Dorsolateral prefrontal cortex (tissue), 120 donors: ENCODE measurements at regions of chr2 and their contacts with region 1.

Region 1: GRCh38 chr2:24490674-24491625 is at the start of gene NCOA1:
- DNase-seq: peak; percentile 73 to 92 (median 86)
- H3K4me3 ChIP-seq: peak within 1 kb of the TSS; percentile 60 to 94 (median 82)
- H3K27ac ChIP-seq: peak within 1 kb of the TSS; percentile 70 to 99 (median 96)
- H3K27me3 ChIP-seq: no peaks in the 10 kb centered on the region
- CTCF ChIP-seq: peak in 32 of 56 donors; percentile 8 to 64 (median 32)
- total RNA-seq, gene NCOA1: 72.6 to 141 (median 104) TPM

Region 2: DNA sequence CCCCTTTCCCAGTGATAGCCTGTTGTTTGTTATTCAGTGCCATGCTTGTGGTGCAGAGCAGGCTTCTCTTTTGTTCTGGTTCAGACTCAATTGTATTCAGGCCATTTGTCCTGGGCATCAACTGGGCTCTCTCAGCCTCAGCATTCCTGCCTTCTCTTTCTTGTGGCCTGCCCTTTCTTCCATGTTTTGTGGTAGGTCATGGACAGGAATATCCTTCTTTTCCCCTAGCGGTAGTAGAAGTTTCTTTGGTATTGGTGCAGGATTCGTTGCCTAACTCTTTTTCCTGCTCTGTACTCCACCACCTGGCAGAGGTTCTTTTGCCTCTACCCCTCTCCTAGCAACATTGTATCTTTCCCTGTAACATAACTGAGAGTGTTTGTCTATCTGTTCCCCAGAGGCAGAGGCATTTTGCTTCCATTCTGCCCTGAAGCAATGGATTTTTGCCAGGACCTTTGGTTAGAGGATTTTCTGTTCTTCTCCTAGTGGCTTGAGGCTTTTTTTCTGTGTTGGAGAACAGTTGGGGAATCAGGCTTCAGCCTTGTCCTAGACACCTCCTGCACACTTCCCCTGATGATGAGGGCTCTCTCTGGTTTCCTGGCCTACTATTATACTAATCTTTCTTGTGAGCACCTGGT is 68.6 kb after region 1 on chr2:
- intact Hi-C with region 1: loop called in 1 of 2 experiments (anchors 5 kb)
- DNase-seq: no peak
- H3K4me3 ChIP-seq: peak overlapping the region in 2 of 59 donors; percentile 18 to 36
- H3K27ac ChIP-seq: peak overlapping the region in 37 of 59 donors; percentile 0 to 77 (median 48)
- H3K27me3 ChIP-seq: no peaks in the 10 kb centered on the region
- CTCF ChIP-seq: no peak

Region 3: DNA sequence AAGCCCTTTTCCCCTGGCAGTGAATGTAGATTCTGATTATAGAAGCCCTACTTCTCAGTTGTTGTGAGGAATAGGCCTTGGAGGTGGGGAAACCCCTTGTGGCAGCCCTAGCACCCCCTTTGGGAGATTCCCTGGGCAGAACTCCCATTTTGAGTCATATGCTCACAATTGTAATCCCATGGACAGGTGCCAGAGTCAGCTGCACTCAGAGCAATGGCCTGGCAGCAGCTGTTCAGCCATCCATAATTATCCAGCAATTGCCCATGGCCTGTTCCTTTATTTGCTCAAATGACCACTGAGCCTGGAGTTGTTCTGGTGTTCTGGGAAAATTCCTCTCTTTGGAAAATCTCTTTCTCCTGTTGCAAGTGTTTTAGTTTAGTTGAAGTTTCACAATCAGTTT is 230.5 kb after region 1 on chr2:
- intact Hi-C with region 1: loop called (anchors 10 kb)
- DNase-seq: peak; percentile 56 to 90 (median 80)
- H3K4me3 ChIP-seq: peak overlapping the region in 13 of 59 donors; percentile 0 to 40 (median 5)
- H3K27ac ChIP-seq: peak overlapping the region; percentile 6 to 89 (median 75)
- H3K27me3 ChIP-seq: no peaks in the 10 kb centered on the region
- CTCF ChIP-seq: peak in 23 of 56 donors; percentile 7 to 55 (median 26)

Region 4: DNA sequence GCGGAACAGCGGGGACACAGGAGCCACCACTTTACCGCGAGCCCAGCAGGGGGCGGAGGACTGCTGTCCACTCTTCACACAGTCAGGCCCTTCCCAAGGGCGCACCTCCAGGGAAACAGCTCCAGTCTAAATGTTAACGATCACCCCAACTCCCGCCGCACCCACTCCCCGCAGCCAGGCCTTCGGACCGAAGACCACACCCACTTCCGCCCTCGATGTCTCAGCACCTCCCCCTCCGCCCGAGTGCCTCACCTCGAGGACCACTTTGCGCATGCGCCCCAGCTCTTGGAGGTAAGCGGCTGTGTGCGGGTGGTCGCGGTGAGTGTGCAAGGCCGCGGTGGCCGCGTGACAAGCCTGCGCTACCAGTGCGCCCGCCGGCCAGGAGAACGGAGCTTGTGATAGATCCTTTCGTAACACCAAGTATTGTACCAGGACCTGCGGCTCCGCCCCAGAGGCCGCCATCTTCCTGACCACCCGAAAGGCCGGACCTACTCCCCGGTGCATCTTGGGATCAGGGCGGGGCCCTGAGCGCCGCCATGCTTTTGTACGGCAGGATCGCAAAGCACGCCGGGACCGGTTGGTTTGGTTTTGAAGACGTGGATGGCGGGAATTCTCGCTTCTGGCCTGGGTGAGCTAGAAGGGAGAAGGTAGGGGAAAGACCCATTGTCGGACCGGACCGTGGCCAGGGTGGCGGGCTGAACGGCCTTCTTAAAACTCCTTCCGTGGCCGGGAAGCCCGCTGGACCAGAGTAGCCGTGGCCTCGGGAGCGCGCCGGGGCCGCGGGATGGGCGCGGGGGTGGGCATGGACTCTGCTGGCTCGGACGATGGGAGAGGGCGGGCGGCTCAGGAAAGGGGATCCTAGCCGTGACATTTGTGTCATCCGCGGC is 302.2 kb after region 1 on chr2 and contains the starts of genes CENPO and PTRHD1:
- intact Hi-C with region 1: loop called (anchors 1 to 2 kb)
- DNase-seq: peak; percentile 95 to 97 (median 97)
- H3K4me3 ChIP-seq: peak within 1 kb of the TSS; percentile 50 to 97 (median 85)
- H3K27ac ChIP-seq: peak within 1 kb of the TSS; percentile 93 to 100 (median 99)
- H3K27me3 ChIP-seq: no peaks in the 10 kb centered on the region
- CTCF ChIP-seq: peak in 54 of 56 donors; percentile 41 to 77 (median 59)
- total RNA-seq, gene CENPO: 4.9 to 17.9 (median 8.5) TPM
- total RNA-seq, gene PTRHD1: 12.2 to 33.9 (median 21.9) TPM

Region 5: GRCh38 chr2:24920098-24920808 is 429.3 kb after region 1 on chr2 and contains the start of gene ADCY3:
- intact Hi-C with region 1: loop called in 1 of 2 experiments (anchors 10 kb)
- DNase-seq: peak in 6 of 10 donors; percentile 56 to 81 (median 64)
- H3K4me3 ChIP-seq: peak within 1 kb of the TSS; percentile 57 to 86 (median 73)
- H3K27ac ChIP-seq: peak within 1 kb of the TSS in 56 of 59 donors; percentile 5 to 88 (median 74)
- H3K27me3 ChIP-seq: no peaks in the 10 kb centered on the region
- CTCF ChIP-seq: no peak
- total RNA-seq, gene ADCY3: 67.4 to 150 (median 95.0) TPM